ENCODE measurements at regions of chr11 and their contacts with region 1.

Region 1: GRCh38 chr11:112074026-112074811 is at the start of gene NKAPD1:
- H3K4me3 Mint-ChIP-seq: peak within 1 kb of the TSS; percentile 96
- H3K27ac Mint-ChIP-seq: peak within 1 kb of the TSS; percentile 100
- H3K4me1 Mint-ChIP-seq: peaks cover 34% of the 10 kb centered on the region
- H3K27me3 Mint-ChIP-seq: no peaks in the 10 kb centered on the region

Region 2: GRCh38 chr11:111870886-111871692 is 203.1 kb before region 1 on chr11 and contains the start of gene ALG9:
- intact Hi-C with region 1: loop called (anchors 5 kb)
- H3K4me3 Mint-ChIP-seq: peak within 1 kb of the TSS; percentile 84
- H3K27ac Mint-ChIP-seq: peak within 1 kb of the TSS; percentile 88
- H3K4me1 Mint-ChIP-seq: peaks cover 6% of the 10 kb centered on the region
- H3K27me3 Mint-ChIP-seq: no peaks in the 10 kb centered on the region

Region 3: DNA sequence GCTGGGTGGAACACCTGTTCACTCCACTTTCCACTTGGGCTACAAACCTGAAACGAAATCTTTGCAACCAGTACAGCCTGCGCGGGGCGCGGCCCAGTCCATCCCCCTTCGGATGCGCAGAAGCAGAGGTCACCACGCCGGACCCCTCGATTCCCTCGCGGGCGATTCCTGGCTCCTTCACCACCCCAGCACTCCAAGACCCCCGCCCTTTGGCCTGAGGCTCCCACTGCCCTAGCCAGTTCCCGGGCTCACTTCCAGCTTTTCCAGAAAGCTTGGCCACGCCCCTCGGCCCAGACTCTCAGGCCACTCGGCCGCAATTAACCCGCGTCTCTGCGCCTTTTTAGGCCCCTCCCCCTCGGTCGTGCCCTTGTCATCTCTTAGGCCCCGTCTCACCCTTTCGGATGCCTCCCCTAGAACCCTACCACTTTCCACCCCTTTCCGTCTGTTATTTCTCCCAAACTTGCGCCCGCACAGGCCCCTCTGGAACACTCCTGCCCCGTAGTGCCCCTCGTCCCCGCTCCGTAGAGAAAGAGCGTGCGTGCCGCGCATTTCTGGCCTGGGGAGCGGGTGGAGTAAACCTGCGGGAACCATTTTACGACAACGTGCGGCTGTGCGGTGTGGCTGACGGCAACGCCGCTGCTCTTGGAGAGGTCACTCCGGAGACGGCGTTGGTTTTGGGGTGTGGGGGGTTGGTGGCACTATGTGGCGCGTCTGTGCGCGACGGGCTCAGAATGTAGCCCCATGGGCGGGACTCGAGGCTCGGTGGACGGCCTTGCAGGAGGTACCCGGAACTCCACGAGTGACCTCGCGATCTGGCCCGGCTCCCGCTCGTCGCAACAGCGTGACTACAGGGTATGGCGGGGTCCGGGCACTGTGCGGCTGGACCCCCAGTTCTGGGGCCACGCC is 49.2 kb before region 1 on chr11 and contains the start of gene DLAT:
- intact Hi-C with region 1: loop called (anchors 5 kb)
- H3K4me3 Mint-ChIP-seq: peak within 1 kb of the TSS; percentile 98
- H3K27ac Mint-ChIP-seq: peak within 1 kb of the TSS; percentile 96
- H3K4me1 Mint-ChIP-seq: peaks cover 11% of the 10 kb centered on the region
- H3K27me3 Mint-ChIP-seq: no peaks in the 10 kb centered on the region